ENCODE measurements at regions of chr3 and their contacts with region 1.

Region 1: DNA sequence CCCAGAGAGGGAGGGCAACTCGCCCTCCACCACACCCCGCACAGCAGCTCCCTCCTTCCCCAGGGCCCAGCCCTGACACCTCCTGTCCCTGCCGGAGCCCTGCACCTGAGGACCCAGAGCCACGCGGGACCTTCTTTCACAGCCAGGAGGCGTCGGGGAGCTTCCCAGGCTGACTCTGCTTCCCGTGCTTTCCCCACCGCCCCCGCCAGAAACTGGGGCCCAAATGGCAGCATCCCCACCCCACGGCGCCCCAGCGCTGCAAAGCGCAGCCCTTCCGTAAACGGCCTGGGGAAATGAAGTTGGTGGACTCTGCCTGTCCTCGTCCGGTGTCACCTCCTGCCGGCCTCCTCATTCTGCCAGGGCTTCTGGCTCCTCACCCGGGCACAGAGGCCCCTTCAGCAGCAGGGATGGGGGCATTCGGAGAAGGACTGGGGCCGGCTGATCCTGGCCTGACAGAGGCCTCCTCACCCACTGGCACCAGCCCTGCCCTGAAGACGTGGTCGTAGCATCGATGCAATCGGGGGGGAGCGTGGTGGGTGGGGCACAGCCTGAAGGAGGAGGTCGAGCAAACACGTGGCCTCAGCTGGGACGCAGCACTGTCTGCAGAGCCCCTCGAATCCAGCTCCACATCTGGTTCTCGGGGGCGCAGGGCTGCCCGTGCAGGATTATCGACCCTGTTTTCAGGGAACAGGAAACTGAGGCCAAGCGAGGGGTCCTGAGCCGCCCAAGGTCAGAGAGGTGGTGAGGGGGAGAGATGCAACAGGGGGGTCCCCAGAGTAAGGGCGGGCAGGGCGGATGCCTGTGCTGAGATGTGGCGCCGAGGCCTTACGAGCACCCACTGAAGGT is 235.4 kb downstream of the XXYLT1 start:
- DNase-seq: peak in 1 of 2 experiments; percentile 63
- H3K4me3 ChIP-seq: no peak overlapping the region
- H3K27ac ChIP-seq: no peak overlapping the region
- H3K4me1 ChIP-seq: peaks cover 6 to 22% (median 13%) of the 10 kb centered on the region in 4 experiments
- H3K27me3 ChIP-seq: peaks cover 0 to 9% (median 8%) of the 10 kb centered on the region in 4 experiments; a peak in 3 of 7 replicates
- CTCF ChIP-seq: peak; percentile 63 to 74 (median 69)
- EP300 ChIP-seq: no peak
- POLR2A ChIP-seq: no peak
- RAD21 ChIP-seq: peak; percentile 69 to 73

Region 2: GRCh38 chr3:195020921-195021320 is 14.6 kb before region 1 on chr3:
- CTCF ChIA-PET with region 1: interaction called, 33 read pairs
- POLR2A ChIA-PET with region 1: no interaction called
- DNase-seq: no peak
- H3K4me3 ChIP-seq: no peak overlapping the region
- H3K27ac ChIP-seq: no peak overlapping the region
- H3K4me1 ChIP-seq: no peaks in the 10 kb centered on the region
- H3K27me3 ChIP-seq: no peaks in the 10 kb centered on the region
- CTCF ChIP-seq: no peak
- EP300 ChIP-seq: no peak
- POLR2A ChIP-seq: no peak
- RAD21 ChIP-seq: no peak

Region 3: GRCh38 chr3:195048059-195048905 is 12.7 kb after region 1 on chr3:
- CTCF ChIA-PET with region 1: interaction called, 11 read pairs
- POLR2A ChIA-PET with region 1: no interaction called
- DNase-seq: no peak
- H3K4me3 ChIP-seq: no peak overlapping the region
- H3K27ac ChIP-seq: no peak overlapping the region
- H3K4me1 ChIP-seq: peaks cover 0 to 5% (median 2%) of the 10 kb centered on the region in 4 experiments; a peak in 3 of 7 replicates
- H3K27me3 ChIP-seq: no peaks in the 10 kb centered on the region
- CTCF ChIP-seq: no peak
- EP300 ChIP-seq: no peak
- POLR2A ChIP-seq: no peak
- RAD21 ChIP-seq: no peak

Region 4: GRCh38 chr3:195059006-195059350 is 23.4 kb after region 1 on chr3:
- CTCF ChIA-PET with region 1: interaction called, 23 read pairs
- POLR2A ChIA-PET with region 1: no interaction called
- DNase-seq: no peak
- H3K4me3 ChIP-seq: no peak overlapping the region
- H3K27ac ChIP-seq: no peak overlapping the region
- H3K4me1 ChIP-seq: peaks cover 0 to 5% (median 0%) of the 10 kb centered on the region in 4 experiments; a peak in 3 of 7 replicates
- H3K27me3 ChIP-seq: no peaks in the 10 kb centered on the region
- CTCF ChIP-seq: no peak
- EP300 ChIP-seq: no peak
- POLR2A ChIP-seq: no peak
- RAD21 ChIP-seq: no peak

Region 5: GRCh38 chr3:195172039-195172684 is 136.6 kb after region 1 on chr3:
- CTCF ChIA-PET with region 1: no interaction called
- POLR2A ChIA-PET with region 1: no interaction called
- DNase-seq: no peak
- H3K4me3 ChIP-seq: no peak overlapping the region
- H3K27ac ChIP-seq: no peak overlapping the region
- H3K4me1 ChIP-seq: peaks cover 2 to 7% (median 6%) of the 10 kb centered on the region in 4 experiments; a peak in 6 of 7 replicates
- H3K27me3 ChIP-seq: no peaks in the 10 kb centered on the region
- CTCF ChIP-seq: no peak
- EP300 ChIP-seq: no peak
- POLR2A ChIP-seq: no peak
- RAD21 ChIP-seq: no peak

Region 6: GRCh38 chr3:195458316-195458717 is 422.7 kb after region 1 on chr3:
- CTCF ChIA-PET with region 1: no interaction called
- POLR2A ChIA-PET with region 1: no interaction called
- DNase-seq: no peak
- H3K4me3 ChIP-seq: no peak overlapping the region
- H3K27ac ChIP-seq: no peak overlapping the region
- H3K4me1 ChIP-seq: no peaks in the 10 kb centered on the region
- H3K27me3 ChIP-seq: no peaks in the 10 kb centered on the region
- CTCF ChIP-seq: no peak
- EP300 ChIP-seq: no peak
- POLR2A ChIP-seq: no peak
- RAD21 ChIP-seq: no peak